ENCODE measurements at regions of chr2 and their contacts with region 1.

Region 1: DNA sequence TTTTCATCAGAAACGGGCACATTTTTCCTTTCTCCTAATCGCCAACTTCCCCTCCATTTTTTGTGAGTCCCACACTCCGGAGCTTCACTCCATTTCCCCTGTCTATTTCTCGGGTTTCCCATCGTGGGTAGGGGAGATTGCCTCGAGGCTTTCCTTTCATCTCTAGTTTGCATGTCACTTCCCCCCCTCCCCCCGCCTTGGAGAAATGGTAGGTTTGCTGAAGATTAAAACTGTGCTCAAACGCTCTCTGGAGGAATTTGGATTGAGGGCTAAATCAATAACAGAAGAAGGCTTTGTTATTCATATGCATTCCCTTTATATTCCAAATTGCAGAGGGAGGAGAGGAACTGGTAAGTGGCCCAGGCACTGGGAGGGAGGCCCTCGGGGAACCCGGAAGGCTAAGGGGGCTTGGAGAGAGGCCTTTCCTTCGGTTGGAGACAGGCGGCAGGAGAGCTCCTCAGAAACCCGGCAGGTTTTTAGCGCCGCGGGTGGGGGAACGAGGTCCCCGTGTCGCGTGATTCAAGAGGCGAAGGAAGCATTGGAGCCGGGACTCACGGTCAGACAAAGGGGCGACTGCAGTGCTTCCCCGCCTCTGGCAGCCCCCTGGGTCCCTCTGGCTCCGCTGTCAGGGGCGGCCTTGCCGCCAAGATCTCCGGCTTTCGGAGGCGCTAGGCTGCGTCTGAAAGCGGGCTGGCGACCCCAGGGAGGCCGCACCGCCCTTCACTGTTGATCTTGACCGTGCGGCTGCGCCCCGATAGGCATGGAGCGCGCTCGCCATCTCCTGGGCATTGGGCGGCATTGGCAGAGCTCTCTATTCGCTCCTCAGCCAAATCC is 2.4 kb upstream of the HOXD12 start:
- DNase-seq: peak; percentile 77
- H3K4me3 ChIP-seq: peak overlapping the region; percentile 63
- H3K27ac ChIP-seq: no peak overlapping the region
- H3K4me1 ChIP-seq: peaks cover 14% of the 10 kb centered on the region
- CTCF ChIP-seq: peak; percentile 76

Region 2: GRCh38 chr2:175366815-175367214 is 730.4 kb before region 1 on chr2:
- CTCF ChIA-PET with region 1: no interaction called
- POLR2A ChIA-PET with region 1: no interaction called
- intact Hi-C with region 1: loop called (anchors 1 kb)
- DNase-seq: peak; percentile 29
- H3K4me3 ChIP-seq: no peak overlapping the region
- H3K27ac ChIP-seq: no peak overlapping the region
- H3K4me1 ChIP-seq: no peaks in the 10 kb centered on the region
- CTCF ChIP-seq: peak; percentile 87

Region 3: DNA sequence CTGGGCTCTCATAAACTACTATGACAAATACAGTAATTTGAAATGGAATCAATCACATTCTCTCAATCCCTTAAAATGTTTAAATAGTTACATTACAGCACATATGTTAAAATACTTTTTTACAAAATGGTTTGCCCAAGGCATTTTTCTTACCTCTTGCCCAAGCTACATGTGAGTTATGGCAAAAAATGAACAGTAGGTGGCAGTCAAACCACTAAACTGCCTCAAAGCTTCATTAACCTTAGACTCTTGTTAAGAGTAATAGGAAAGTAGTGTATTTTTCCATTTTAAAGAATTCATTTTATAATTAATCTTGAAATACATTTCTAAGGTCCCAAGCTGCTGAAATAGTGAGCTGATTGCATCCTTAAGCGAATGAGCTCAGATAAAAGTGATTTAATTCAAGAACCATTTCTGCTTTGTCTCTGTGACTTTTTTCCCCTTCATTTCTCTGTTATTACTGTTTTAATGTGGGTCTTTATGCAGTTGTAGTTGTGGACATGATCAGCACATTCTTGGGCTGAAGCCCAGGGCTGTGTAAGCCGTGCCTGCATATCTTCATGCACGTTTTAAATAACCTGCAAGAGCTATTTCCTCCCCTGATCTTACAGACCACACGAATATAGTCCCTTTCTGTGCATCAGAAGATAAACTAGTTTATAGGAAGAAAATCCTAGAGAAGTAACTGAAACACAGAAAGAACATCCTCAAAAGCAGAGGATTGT is 406.9 kb before region 1 on chr2:
- CTCF ChIA-PET with region 1: no interaction called
- POLR2A ChIA-PET with region 1: interaction called, 3 read pairs
- intact Hi-C with region 1: loop called (anchors 1 kb)
- DNase-seq: peak; percentile 52
- H3K4me3 ChIP-seq: no peak overlapping the region
- H3K27ac ChIP-seq: no peak overlapping the region
- H3K4me1 ChIP-seq: no peaks in the 10 kb centered on the region
- CTCF ChIP-seq: peak; percentile 86